Activated CD4-positive, alpha-beta T cell treated with anti-CD3 and anti-CD28 coated beads for 36 hours (primary cell): ENCODE measurements at regions of chr6 and their contacts with region 1.

Region 1: DNA sequence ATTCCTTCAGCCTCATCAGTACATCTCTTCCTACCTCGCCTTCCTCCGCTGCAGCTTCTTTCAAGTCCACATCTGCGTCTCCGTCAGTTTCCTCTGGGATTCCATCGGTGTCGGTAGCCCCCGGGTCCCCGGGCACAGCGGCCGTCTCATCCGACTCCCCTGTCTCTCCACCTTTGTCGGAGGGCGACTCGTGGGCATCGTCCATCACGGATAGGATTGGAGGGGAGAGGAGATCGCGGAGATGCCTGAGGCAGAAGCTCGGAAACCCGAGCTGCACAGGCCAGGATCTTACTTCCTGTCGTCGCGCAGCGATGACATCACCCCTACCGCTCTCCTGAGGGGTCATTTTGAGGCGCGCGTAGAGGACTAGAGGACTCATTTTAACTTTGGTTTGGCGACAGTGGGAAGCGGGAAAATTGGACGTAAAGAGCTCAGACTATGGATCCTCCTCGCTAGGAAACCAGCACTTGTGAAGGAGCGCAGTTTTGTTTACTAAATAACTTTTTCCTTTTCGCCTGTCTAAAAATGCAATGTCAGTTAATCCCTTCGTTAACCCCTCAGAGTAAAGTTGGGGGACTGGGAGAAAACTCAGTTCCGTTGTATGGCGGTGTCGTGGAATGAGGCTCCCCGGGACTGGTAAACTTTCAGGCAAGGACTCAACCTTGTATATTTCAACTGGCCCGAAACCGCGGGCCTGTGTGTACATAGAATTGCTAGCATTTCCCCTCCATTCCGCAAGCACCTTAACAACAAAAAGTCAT is at the start of gene TAF11:
- DNase-seq: peak; percentile 96
- ATAC-seq: peak; percentile 89
- H3K4me3 Mint-ChIP-seq: peak within 1 kb of the TSS; percentile 100
- H3K27ac Mint-ChIP-seq: peak within 1 kb of the TSS; percentile 100
- H3K4me1 Mint-ChIP-seq: peaks cover 41% of the 10 kb centered on the region
- H3K27me3 Mint-ChIP-seq: no peaks in the 10 kb centered on the region
- total RNA-seq, gene TAF11: 28.7 to 32.3 TPM

Region 2: DNA sequence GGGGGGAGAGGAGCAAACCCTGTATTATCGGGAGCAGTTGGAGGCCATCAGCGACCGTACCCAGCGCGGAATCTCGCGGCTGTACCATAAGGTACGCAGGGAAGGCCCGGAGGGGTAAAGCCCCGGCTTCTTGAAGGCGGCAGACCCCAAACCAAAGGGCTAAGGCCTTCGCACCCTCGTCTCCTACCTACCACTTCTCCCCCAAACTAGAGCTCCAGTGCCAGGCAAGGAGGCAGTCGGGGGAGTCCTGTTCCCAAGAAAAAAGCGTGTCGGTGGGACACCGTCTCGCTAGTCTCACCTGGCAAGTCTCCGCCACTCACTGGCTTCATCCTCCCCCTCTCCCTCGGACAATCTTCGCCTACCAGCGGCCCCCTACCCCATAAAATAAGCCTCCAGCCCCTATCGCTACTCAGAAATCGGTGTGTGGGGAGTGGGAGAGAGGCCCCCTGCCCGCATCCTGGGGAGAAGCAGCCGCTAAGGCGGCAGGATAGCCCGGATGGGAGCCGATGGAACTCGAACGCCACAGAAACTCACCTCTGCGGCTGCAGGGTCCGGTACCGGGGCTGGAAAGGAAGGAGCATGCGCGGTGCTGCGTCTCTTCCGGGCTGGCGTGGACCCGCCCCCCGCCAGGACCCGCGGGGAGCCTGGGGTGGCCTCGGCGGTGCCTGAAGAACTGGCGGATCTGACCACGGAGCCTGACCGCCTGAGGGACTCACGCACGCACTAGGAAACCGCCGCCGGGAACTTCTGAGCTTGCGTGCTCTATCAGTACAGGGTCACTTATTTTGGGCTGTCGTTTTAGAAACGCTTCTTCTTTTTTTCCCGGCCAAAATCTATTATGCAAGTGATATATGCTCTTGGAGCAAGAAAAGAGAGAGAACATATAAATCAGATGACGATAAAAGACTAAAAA is 462.2 kb before region 1 on chr6 and contains the start of gene RPS10:
- CTCF ChIA-PET with region 1: no interaction called
- POLR2A ChIA-PET with region 1: no interaction called
- intact Hi-C with region 1: loop called in 1 of 2 experiments (anchors 2 kb)
- DNase-seq: peak; percentile 95
- ATAC-seq: peak; percentile 95
- H3K4me3 Mint-ChIP-seq: peak within 1 kb of the TSS; percentile 97
- H3K27ac Mint-ChIP-seq: peak within 1 kb of the TSS; percentile 99
- H3K4me1 Mint-ChIP-seq: peaks cover 35% of the 10 kb centered on the region
- H3K27me3 Mint-ChIP-seq: no peaks in the 10 kb centered on the region
- total RNA-seq, gene RPS10: 2,447 to 2,541 TPM

Region 3: DNA sequence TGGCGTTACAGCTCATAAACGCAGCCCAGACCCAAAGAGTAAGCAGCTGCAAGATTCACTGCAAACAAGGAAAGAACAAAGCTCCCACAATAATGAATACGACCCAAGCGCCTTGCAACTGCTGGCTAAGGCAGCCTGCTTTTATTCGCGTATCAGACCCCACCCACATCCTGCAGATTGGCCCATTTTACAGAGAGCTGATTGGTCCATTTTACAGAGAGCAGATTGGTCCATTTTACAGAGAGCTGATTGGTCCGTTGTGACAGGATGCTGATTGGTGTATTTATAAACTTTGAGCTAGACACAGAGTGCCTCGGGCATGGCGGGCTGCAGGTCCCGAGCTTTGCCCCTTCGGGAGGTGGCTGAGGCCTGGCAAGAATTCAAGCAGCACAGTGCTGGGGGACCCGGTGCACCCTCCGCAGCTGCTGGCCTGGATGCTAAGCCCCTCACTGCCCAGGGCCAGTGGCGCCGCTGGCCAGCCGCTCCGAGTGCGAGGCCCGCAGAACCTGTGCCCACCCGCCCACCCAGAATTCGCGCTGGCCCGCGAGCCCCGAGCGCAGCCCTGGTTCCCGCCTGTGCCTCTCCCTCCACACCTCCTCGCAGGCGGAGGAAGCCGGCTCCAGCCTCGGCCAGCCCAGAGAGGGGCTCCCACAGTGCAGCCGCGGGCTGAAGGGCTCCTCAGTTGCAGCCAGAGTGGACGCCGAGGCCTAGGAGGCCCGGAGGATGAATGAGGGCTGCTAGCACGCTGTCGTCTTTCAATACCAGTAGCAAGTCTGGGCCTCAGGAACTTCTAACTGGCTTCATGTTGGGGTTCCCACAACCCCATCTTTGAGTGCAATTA is 450.9 kb before region 1 on chr6:
- CTCF ChIA-PET with region 1: no interaction called
- POLR2A ChIA-PET with region 1: no interaction called
- intact Hi-C with region 1: no loop called
- DNase-seq: no peak
- ATAC-seq: no peak
- H3K4me3 Mint-ChIP-seq: no peak overlapping the region
- H3K27ac Mint-ChIP-seq: no peak overlapping the region
- H3K4me1 Mint-ChIP-seq: no peaks in the 10 kb centered on the region
- H3K27me3 Mint-ChIP-seq: no peaks in the 10 kb centered on the region

Region 4: GRCh38 chr6:34671801-34672656 is 215.9 kb before region 1 on chr6:
- CTCF ChIA-PET with region 1: no interaction called
- POLR2A ChIA-PET with region 1: interaction called, 4 read pairs
- intact Hi-C with region 1: loop called in 1 of 2 experiments (anchors 10 kb)
- DNase-seq: peak; percentile 85
- ATAC-seq: peak; percentile 99
- H3K4me3 Mint-ChIP-seq: peak overlapping the region; percentile 65
- H3K27ac Mint-ChIP-seq: peak overlapping the region; percentile 93
- H3K4me1 Mint-ChIP-seq: peaks cover 65% of the 10 kb centered on the region
- H3K27me3 Mint-ChIP-seq: no peaks in the 10 kb centered on the region

Region 5: GRCh38 chr6:34791701-34792235 is 96.2 kb before region 1 on chr6 and contains the start of gene BLTP3A:
- CTCF ChIA-PET with region 1: interaction called, 3 read pairs
- POLR2A ChIA-PET with region 1: interaction called, 10 read pairs
- intact Hi-C with region 1: loop called (anchors 1 to 2 kb)
- DNase-seq: peak; percentile 88
- ATAC-seq: peak; percentile 95
- H3K4me3 Mint-ChIP-seq: peak within 1 kb of the TSS; percentile 99
- H3K27ac Mint-ChIP-seq: peak within 1 kb of the TSS; percentile 95
- H3K4me1 Mint-ChIP-seq: peaks cover 21% of the 10 kb centered on the region
- H3K27me3 Mint-ChIP-seq: no peaks in the 10 kb centered on the region
- total RNA-seq, gene BLTP3A: 17.0 to 21.0 TPM

Region 6: DNA sequence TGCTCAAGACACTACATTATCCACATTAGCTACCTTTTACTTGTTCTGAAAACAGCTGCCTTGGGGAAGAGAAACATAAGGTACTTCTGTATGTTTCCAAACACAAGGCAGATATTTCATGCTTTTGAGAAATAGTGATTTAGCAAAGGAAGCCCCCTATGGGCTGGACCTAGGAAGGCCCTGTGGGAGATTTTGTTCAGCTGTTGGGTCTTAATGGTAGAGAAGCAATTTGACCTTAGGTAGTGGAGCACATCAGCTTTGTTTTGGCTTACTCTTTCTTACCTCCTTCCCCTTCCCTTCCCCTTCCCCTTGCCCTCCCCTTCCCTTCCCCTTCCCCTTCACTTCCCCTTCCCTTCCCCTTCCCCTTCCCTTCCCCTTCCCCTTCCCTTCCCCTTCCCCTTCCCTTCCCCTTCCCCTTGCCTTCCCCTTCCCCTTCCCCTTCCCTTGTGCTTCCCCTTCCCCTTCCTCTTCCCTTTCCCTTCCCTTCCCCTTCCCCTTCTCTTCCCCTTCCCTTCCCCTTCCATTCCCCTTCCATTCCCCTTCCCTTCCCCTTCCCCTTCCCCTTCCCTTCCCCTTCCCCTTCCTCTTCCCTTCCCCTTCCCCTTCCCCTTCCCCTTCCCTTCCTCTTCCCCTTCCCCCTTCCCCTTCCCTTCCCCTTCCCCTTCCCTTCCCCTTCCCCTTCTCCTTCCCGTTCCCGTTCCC is 85.8 kb after region 1 on chr6:
- CTCF ChIA-PET with region 1: no interaction called
- POLR2A ChIA-PET with region 1: no interaction called
- intact Hi-C with region 1: no loop called
- DNase-seq: no peak
- ATAC-seq: no peak
- H3K4me3 Mint-ChIP-seq: no peak overlapping the region
- H3K27ac Mint-ChIP-seq: no peak overlapping the region
- H3K4me1 Mint-ChIP-seq: no peaks in the 10 kb centered on the region
- H3K27me3 Mint-ChIP-seq: no peaks in the 10 kb centered on the region

Region 7: DNA sequence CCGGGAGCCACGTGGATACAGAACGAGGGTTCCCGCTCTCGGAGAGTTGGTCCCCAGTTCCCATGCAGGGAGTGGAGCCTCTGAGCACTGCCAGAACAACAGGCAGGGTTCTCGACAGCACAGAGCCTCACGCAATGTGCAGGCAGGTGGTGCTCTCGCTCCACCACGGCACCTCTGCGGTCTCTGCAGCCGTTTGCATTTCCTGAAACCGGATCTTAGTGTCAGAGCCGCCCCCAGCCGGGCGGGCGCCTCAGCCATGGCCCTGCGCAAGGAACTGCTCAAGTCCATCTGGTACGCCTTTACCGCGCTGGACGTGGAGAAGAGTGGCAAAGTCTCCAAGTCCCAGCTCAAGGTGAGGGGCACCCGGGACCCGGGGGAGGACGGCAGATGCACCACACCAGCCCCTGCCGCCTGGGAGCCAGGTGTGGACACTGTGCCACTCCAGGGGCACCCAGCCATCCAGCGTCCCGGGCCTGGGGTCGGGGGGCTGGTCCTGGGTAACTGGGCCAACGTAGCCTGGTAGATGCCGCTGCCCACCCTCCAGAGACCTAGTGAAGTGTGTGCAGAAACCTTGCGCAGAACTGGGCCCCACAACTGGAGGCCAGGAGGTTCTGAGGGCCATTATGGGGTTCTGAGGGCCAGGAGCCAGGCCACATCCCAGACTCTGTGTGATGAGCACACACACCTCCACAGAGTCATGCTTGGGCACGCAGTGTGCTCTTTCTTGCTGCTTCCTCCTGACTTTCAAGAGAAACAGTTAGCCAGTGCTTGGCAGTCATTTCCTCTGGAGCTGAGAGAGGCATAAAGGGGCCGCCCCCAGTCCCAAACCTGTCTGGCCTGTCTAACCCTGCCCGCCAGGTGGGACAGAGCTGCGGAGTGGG is 409.9 kb after region 1 on chr6 and contains the start of gene DEF6:
- CTCF ChIA-PET with region 1: no interaction called
- POLR2A ChIA-PET with region 1: no interaction called
- intact Hi-C with region 1: loop called in 1 of 2 experiments (anchors 5 kb)
- DNase-seq: peak; percentile 95
- ATAC-seq: peak; percentile 82
- H3K4me3 Mint-ChIP-seq: peak within 1 kb of the TSS; percentile 89
- H3K27ac Mint-ChIP-seq: peak within 1 kb of the TSS; percentile 96
- H3K4me1 Mint-ChIP-seq: peaks cover 48% of the 10 kb centered on the region
- H3K27me3 Mint-ChIP-seq: no peaks in the 10 kb centered on the region
- total RNA-seq, gene DEF6: 74.1 to 86.6 TPM